ENCODE measurements at regions of chr1 and their contacts with region 1.

Region 1: GRCh38 chr1:229672246-229672645 is 46.2 kb downstream of the URB2 start:
- DNase-seq: no peak
- ATAC-seq: no peak

Region 2: GRCh38 chr1:229691362-229691761 is 19.1 kb after region 1 on chr1:
- intact Hi-C with region 1: loop called (anchors 2 kb)
- DNase-seq: no peak
- ATAC-seq: no peak

Measured in Right ventricle myocardium superior (tissue), 1 donor.